Activated CD8-positive, alpha-beta T cell treated with anti-CD3 and anti-CD28 coated beads for 36 hours (primary cell): ENCODE measurements at regions of chr19 and their contacts with region 1.

Region 1: DNA sequence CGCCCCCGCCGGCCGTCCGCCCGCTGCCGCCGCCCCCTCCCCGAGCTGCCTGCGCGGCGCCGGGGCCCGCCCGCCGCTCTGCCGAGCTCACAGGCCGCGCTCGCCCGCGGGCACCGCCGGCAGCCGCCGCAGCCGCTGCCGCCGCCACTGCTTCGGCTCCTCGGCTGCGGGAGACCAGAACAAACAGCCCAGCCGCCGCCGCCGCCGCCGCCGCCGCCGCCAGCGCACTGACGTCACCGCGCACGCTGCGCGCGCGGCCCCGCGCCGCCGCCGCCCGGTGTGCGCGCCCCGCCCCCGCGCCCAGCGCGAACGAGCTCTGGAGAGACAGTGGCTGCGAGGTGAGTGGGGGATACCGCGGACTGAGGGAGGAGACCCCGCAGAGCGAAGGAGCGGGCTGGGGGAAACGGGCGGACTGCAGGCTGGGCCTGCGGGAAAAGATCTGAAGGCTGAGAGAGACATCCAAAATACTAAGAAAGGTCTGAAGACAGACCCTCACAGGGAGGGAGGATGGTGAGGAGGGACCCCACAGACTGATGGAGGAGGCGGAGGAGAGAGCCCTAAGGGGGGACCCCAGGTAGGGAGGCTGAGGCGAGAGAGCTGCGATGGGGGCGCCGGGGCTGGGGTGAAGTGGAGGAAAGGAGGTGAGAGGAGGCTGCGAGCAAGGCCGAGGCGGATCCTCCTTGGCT is at the start of gene BRD4:
- DNase-seq: peak; percentile 78
- ATAC-seq: peak; percentile 59
- H3K4me3 Mint-ChIP-seq: peak within 1 kb of the TSS; percentile 89
- H3K27ac Mint-ChIP-seq: peak within 1 kb of the TSS; percentile 97
- H3K4me1 Mint-ChIP-seq: peaks cover 31% of the 10 kb centered on the region
- H3K27me3 Mint-ChIP-seq: no peaks in the 10 kb centered on the region
- CTCF ChIP-seq: no peak
- total RNA-seq, gene BRD4: 94.3 to 99.6 TPM

Region 2: GRCh38 chr19:15266683-15267082 is 65.8 kb before region 1 on chr19:
- CTCF ChIA-PET with region 1: no interaction called
- POLR2A ChIA-PET with region 1: no interaction called
- intact Hi-C with region 1: no loop called
- DNase-seq: no peak
- ATAC-seq: no peak
- H3K4me3 Mint-ChIP-seq: no peak overlapping the region
- H3K27ac Mint-ChIP-seq: no peak overlapping the region
- H3K4me1 Mint-ChIP-seq: peaks cover 12% of the 10 kb centered on the region
- H3K27me3 Mint-ChIP-seq: no peaks in the 10 kb centered on the region
- CTCF ChIP-seq: no peak

Region 3: GRCh38 chr19:15288146-15288963 is 44.1 kb before region 1 on chr19:
- CTCF ChIA-PET with region 1: no interaction called
- POLR2A ChIA-PET with region 1: interaction called, 15 read pairs
- intact Hi-C with region 1: loop called (anchors 5 kb)
- DNase-seq: no peak
- ATAC-seq: peak; percentile 13
- H3K4me3 Mint-ChIP-seq: peak overlapping the region; percentile 26
- H3K27ac Mint-ChIP-seq: peak overlapping the region; percentile 75
- H3K4me1 Mint-ChIP-seq: peaks cover 95% of the 10 kb centered on the region
- H3K27me3 Mint-ChIP-seq: no peaks in the 10 kb centered on the region
- CTCF ChIP-seq: no peak